Activated CD4-positive, alpha-beta T cell treated with anti-CD3 and anti-CD28 coated beads, Interleukin-2, amount 10 ng/mL, durations not matched to agents 7 days and 5 days (primary cell): ENCODE measurements at regions of chr10 and their contacts with region 1.

Region 1: GRCh38 chr10:8334631-8335030 is 280.1 kb downstream of the GATA3 start:
- DNase-seq: no peak
- H3K4me3 Mint-ChIP-seq: no peak overlapping the region
- H3K27ac Mint-ChIP-seq: no peak overlapping the region
- H3K4me1 Mint-ChIP-seq: peaks cover 65% of the 10 kb centered on the region
- H3K27me3 Mint-ChIP-seq: no peaks in the 10 kb centered on the region

Region 2: GRCh38 chr10:8245131-8245813 is 89.4 kb before region 1 on chr10:
- CTCF ChIA-PET with region 1: no interaction called
- POLR2A ChIA-PET with region 1: no interaction called
- DNase-seq: peak; percentile 52
- H3K4me3 Mint-ChIP-seq: peak overlapping the region; percentile 65
- H3K27ac Mint-ChIP-seq: peak overlapping the region; percentile 95
- H3K4me1 Mint-ChIP-seq: peaks cover 65% of the 10 kb centered on the region
- H3K27me3 Mint-ChIP-seq: no peaks in the 10 kb centered on the region

Region 3: GRCh38 chr10:8350351-8350967 is 15.8 kb after region 1 on chr10:
- CTCF ChIA-PET with region 1: interaction called, 14 read pairs
- POLR2A ChIA-PET with region 1: no interaction called
- DNase-seq: no peak
- H3K4me3 Mint-ChIP-seq: no peak overlapping the region
- H3K27ac Mint-ChIP-seq: no peak overlapping the region
- H3K4me1 Mint-ChIP-seq: no peaks in the 10 kb centered on the region
- H3K27me3 Mint-ChIP-seq: peaks cover under 1% of the 10 kb centered on the region

Region 4: GRCh38 chr10:8463853-8464252 is 129.2 kb after region 1 on chr10:
- CTCF ChIA-PET with region 1: no interaction called
- POLR2A ChIA-PET with region 1: no interaction called
- DNase-seq: no peak
- H3K4me3 Mint-ChIP-seq: no peak overlapping the region
- H3K27ac Mint-ChIP-seq: no peak overlapping the region
- H3K4me1 Mint-ChIP-seq: no peaks in the 10 kb centered on the region
- H3K27me3 Mint-ChIP-seq: peaks cover 14% of the 10 kb centered on the region